Dorsolateral prefrontal cortex (tissue), 120 donors: ENCODE measurements at regions of chr19 and their contacts with region 1.

Region 1: DNA sequence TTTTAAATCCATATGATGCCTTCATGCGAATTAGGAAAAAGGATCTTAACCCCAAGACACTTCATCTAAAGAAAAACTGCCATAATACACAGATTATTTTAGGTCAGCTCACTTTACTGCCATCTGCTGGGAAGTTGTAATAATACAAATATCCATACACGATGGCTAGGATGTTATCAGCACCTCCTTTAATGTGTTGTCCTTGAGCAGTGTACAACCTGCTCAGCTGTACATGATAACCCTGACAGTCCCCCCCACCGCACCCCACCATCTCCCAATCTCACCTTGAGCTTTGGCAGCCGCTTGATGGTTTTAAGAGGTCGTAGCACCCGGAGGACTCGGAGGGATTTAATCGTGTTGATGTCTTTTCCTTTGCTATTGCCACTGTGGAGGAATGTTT is 112.2 kb downstream of the IER2 start:
- DNase-seq: no peak
- H3K4me3 ChIP-seq: no peak overlapping the region
- H3K27ac ChIP-seq: peak overlapping the region in 1 of 59 donors; percentile 29
- H3K27me3 ChIP-seq: no peaks in the 10 kb centered on the region
- CTCF ChIP-seq: peak; percentile 32 to 78 (median 63)

Region 2: DNA sequence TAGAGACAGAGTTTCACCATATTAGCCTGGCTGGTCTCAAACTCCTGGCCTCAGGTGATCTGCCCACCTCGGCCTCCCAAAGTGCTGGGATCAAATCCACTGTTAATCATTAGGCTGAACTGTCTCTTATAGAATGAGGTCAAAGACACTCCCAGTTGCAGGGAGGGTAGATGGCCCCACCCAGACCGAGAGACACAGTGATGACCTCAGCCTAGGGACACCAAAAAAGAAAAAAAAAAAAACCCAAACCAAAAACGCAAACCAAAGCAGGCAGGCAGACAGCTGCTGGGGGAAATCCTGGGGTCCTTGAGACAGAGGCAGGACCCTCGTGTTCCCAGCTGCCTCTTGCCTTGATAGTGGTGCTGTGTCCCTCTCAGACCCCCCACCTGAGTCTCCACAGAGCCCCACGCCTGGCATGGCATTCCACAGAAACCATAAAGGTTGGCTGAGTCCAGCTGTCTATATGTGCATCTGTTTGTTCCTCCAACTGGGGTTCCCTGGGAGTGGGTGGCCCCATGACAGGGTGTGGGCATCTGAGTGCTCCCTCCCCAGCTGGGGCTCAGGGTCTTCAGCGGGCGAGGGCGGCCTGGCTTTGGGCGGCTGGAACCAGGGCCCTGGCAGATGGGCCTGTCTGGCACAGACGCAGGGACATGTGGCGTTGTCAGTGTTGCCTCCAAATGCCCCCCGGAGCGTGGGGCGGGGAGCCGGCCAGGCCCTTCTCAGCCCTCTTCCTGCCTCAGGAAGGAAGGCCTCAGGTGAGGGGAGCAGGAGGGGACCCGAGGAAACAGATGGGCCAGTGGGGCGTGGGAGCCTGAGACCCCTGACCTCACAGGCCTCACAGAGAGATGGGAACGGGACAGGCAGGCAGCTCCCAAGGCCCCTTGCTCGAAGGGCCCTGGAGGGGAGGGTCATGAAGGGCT is 287.9 kb before region 1 on chr19:
- intact Hi-C with region 1: loop called (anchors 2 to 5 kb)
- DNase-seq: peak in 1 of 10 donors; percentile 92
- H3K4me3 ChIP-seq: no peak overlapping the region
- H3K27ac ChIP-seq: peak overlapping the region in 1 of 59 donors; percentile 84
- H3K27me3 ChIP-seq: no peaks in the 10 kb centered on the region
- CTCF ChIP-seq: no peak

Region 3: DNA sequence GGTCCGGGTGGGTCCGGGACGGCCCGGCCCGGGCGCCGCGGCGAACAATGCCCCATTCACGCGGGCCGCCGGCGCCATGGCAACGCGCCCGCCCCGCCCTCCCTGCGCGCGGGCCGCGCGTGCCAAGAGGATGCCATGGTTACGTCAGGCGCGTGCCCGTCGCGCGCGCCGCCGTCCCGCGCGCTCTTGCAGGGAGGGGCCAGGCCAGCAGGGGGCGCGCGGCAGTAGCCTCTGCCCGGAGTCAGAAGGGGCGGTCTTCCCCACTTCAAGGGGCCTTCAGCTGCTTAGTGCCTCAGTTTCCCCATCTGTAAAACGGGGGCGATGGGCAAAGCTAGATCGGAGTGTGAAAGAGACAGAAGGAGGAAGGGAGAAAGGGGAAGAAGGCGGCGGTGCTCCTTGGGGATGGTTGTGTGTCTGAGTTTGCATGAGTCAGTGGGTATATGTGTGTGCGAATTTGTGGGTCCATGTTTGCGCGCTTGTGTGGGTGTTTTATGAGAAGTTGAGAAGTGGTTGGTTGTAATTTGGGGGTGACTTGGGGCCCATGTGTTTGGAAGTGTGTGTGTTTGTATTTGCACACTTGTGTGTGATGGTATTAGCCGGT is 278.8 kb before region 1 on chr19:
- intact Hi-C with region 1: loop called (anchors 2 to 5 kb)
- DNase-seq: peak; percentile 74 to 90 (median 80)
- H3K4me3 ChIP-seq: peak overlapping the region in 54 of 59 donors; percentile 13 to 62 (median 44)
- H3K27ac ChIP-seq: peak overlapping the region in 56 of 59 donors; percentile 28 to 99 (median 94)
- H3K27me3 ChIP-seq: no peaks in the 10 kb centered on the region
- CTCF ChIP-seq: peak; percentile 75 to 99 (median 95)

Region 4: GRCh38 chr19:13117772-13118423 is 144.6 kb before region 1 on chr19 and contains the start of gene NACC1:
- intact Hi-C with region 1: loop called in 1 of 2 experiments (anchors 10 kb)
- DNase-seq: peak; percentile 79 to 96 (median 90)
- H3K4me3 ChIP-seq: peak within 1 kb of the TSS; percentile 66 to 100 (median 94)
- H3K27ac ChIP-seq: peak within 1 kb of the TSS; percentile 20 to 92 (median 78)
- H3K27me3 ChIP-seq: no peaks in the 10 kb centered on the region
- CTCF ChIP-seq: peak in 7 of 56 donors; percentile 13 to 30 (median 24)
- total RNA-seq, gene NACC1: 54.8 to 122 (median 79.3) TPM

Region 5: GRCh38 chr19:13150187-13150930 is 112.1 kb before region 1 on chr19 and contains the starts of genes IER2 and STX10:
- intact Hi-C with region 1: loop called in 1 of 2 experiments (anchors 10 kb)
- DNase-seq: peak; percentile 92 to 97 (median 96)
- H3K4me3 ChIP-seq: peak within 1 kb of the TSS; percentile 61 to 98 (median 91)
- H3K27ac ChIP-seq: peak within 1 kb of the TSS; percentile 79 to 99 (median 96)
- H3K27me3 ChIP-seq: no peaks in the 10 kb centered on the region
- CTCF ChIP-seq: peak; percentile 31 to 81 (median 65)
- total RNA-seq, gene IER2: 15.7 to 43.8 (median 25.6) TPM
- total RNA-seq, gene STX10: 21.7 to 50.2 (median 33.8) TPM

Region 6: DNA sequence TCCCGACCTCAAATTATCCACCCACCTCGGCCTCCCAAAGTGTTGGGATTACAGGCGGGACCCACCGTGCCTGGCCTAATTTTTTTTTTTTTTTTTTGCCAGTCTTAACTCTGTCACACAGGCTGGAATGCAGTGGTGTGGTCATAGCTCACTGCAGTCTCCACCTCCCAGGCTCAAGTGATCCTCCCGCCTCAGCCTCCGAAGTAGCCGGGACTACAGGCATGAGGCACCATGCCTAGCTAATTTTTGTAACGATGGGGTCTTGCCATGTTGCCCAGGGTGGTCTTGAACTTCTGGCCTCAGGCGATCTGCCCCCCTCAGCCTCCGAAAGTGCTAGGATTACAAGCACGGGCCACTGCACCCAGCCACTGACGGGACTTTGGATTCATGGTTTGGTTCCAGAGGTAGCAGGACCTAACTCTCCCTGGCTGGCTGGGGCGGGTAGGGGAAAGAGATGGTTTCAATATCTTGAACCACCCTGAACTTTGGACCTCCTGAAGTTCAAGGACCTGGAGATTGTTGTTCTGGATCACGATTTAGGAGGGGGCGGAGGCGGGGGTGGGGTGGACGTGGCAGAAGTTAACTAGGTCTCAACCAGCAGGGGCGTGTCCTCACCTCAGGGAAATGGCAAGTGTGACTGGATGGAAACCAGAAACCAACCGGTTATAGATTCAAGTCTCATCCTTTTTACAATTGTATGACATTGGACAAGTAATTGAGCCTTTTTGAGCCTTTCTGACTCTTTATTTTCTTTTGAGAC is 71.5 kb before region 1 on chr19:
- intact Hi-C with region 1: loop called in 1 of 2 experiments (anchors 5 kb)
- DNase-seq: no peak
- H3K4me3 ChIP-seq: no peak overlapping the region
- H3K27ac ChIP-seq: no peak overlapping the region
- H3K27me3 ChIP-seq: no peaks in the 10 kb centered on the region
- CTCF ChIP-seq: no peak

Region 7: GRCh38 chr19:13277104-13277809 is 14.8 kb after region 1 on chr19:
- intact Hi-C with region 1: no loop called
- DNase-seq: peak in 3 of 10 donors; percentile 40 to 68 (median 67)
- H3K4me3 ChIP-seq: no peak overlapping the region
- H3K27ac ChIP-seq: peak overlapping the region in 32 of 59 donors; percentile 1 to 77 (median 50)
- H3K27me3 ChIP-seq: no peaks in the 10 kb centered on the region
- CTCF ChIP-seq: peak; percentile 56 to 94 (median 82)